Adrenal gland (tissue), 19 donors: ENCODE measurements at regions of chr6 and their contacts with region 1.

Region 1: GRCh38 chr6:24766680-24767462 is 7.9 kb upstream of the GMNN start:
- DNase-seq: no peak
- H3K4me3 ChIP-seq: no peak overlapping the region
- H3K27ac ChIP-seq: no peak overlapping the region
- H3K4me1 ChIP-seq: peaks cover 0 to 5% of the 10 kb centered on the region in 2 donors
- H3K27me3 ChIP-seq: no peaks in the 10 kb centered on the region
- CTCF ChIP-seq: peak; percentile 41 to 64 (median 52)
- POLR2A ChIP-seq: no peak

Region 2: GRCh38 chr6:24574809-24575208 is 192.1 kb before region 1 on chr6:
- intact Hi-C with region 1: loop called in 1 of 2 experiments (anchors 10 kb)
- DNase-seq: no peak
- H3K4me3 ChIP-seq: no peak overlapping the region
- H3K27ac ChIP-seq: no peak overlapping the region
- H3K4me1 ChIP-seq: no peaks in the 10 kb centered on the region
- H3K27me3 ChIP-seq: no peaks in the 10 kb centered on the region
- CTCF ChIP-seq: no peak
- POLR2A ChIP-seq: no peak

Region 3: GRCh38 chr6:24719125-24719971 is 47.5 kb before region 1 on chr6 and contains the start of gene C6orf62:
- intact Hi-C with region 1: loop called in 1 of 2 experiments (anchors 10 kb)
- DNase-seq: peak in 3 of 7 donors; percentile 31 to 44 (median 34)
- H3K4me3 ChIP-seq: peak within 1 kb of the TSS; percentile 34 to 99 (median 84)
- H3K27ac ChIP-seq: peak within 1 kb of the TSS; percentile 98 to 100 (median 98)
- H3K4me1 ChIP-seq: peaks cover 47% of the 10 kb centered on the region in 2 donors
- H3K27me3 ChIP-seq: no peaks in the 10 kb centered on the region
- CTCF ChIP-seq: no peak
- POLR2A ChIP-seq: no peak
- total RNA-seq, gene C6orf62: 57.2 to 121 (median 98.9) TPM